ENCODE measurements at regions of chr1 and their contacts with region 1.

Region 1: GRCh38 chr1:43529206-43529731 is 1.4 kb upstream of the PTPRF start:
- DNase-seq: peak; percentile 87
- CTCF ChIP-seq: peak; percentile 97

Region 2: GRCh38 chr1:43573066-43573800 is 44.0 kb after region 1 on chr1:
- in situ Hi-C with region 1: no loop called
- DNase-seq: no peak
- CTCF ChIP-seq: no peak

Region 3: DNA sequence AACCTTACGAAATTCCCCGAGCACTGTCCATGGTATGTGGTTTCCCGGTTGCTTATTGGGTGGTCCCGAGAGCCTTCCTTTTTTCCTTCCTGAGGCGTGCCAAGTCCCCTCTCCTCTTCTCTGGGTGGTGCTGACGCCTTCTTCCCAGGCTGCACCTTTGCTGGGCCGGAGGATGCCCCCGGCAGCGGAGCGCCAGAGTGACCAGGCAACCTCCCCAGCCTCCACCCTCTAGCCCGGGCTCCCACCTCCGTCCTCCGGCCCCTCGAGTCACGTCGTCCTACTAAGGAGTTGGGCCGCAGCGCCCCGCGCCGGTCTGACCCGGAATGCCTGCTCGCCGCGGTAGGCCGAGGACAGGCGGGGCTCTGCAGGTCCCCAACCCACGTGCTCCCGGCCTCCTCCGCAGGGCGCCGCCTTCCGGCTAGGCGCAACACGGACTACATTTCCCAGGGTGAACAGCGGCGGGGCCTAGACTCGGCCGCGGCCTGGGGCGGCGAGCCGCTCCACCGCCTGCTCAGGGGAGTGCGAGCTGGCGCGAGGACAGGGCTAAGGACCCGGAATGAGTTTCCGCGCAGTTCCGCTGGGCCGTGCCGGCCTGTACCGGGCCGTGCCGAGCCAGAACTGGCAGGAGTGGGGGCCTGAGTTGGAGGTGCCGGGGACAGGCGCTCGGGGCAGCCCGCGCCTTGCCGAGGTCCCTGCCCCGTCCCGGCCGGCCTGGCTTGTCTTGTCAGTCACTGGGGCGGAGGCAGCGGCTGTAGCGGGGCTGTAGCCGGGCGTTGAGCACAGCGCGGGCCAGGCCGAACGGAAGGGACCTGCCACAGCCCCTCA is 417.2 kb after region 1 on chr1 and contains the start of gene IPO13:
- in situ Hi-C with region 1: loop called (anchors 25 kb)
- DNase-seq: peak; percentile 99
- CTCF ChIP-seq: peak; percentile 86

Measured in GM13976 (cell line).